CD4-positive, alpha-beta T cell (primary cell): ENCODE measurements at regions of chr4 and their contacts with region 1.

Region 1: DNA sequence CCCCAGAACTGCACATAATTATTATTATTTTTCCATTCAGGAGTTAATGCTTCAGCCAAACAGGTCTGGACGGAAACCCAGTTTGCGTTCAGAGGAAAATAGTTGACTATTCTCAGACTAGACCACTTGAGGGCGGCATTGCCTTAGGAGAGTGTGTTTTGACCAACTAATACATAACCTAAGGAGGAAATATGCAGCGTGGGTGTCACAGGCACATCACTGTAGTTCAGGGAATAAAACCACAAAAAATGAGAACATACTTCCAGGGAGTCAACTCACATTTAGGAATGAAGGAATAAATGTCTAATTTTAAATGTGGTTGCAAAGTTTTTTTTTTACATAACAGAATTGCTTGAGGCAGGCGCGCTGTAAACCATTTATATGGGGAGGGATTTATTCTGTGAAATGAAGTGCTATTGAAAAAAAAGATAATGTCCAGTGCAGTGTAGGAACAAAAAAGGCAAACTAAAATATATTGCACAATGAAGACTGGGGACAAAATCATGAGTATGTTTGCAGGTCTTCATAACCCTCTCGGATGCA is 93.3 kb downstream of the SYNPO2 start:
- DNase-seq: peak; percentile 8 to 71 (median 34)
- ATAC-seq: peak; percentile 76
- H3K4me3 ChIP-seq: no peak overlapping the region
- H3K4me3 Mint-ChIP-seq: no peak overlapping the region
- H3K27ac ChIP-seq: no peak overlapping the region
- H3K27ac Mint-ChIP-seq: no peak overlapping the region
- H3K4me1 ChIP-seq: no peaks in the 10 kb centered on the region
- H3K4me1 Mint-ChIP-seq: no peaks in the 10 kb centered on the region
- H3K27me3 ChIP-seq: no peaks in the 10 kb centered on the region
- H3K27me3 Mint-ChIP-seq: no peaks in the 10 kb centered on the region
- CTCF ChIP-seq: peak; percentile 69

Region 2: DNA sequence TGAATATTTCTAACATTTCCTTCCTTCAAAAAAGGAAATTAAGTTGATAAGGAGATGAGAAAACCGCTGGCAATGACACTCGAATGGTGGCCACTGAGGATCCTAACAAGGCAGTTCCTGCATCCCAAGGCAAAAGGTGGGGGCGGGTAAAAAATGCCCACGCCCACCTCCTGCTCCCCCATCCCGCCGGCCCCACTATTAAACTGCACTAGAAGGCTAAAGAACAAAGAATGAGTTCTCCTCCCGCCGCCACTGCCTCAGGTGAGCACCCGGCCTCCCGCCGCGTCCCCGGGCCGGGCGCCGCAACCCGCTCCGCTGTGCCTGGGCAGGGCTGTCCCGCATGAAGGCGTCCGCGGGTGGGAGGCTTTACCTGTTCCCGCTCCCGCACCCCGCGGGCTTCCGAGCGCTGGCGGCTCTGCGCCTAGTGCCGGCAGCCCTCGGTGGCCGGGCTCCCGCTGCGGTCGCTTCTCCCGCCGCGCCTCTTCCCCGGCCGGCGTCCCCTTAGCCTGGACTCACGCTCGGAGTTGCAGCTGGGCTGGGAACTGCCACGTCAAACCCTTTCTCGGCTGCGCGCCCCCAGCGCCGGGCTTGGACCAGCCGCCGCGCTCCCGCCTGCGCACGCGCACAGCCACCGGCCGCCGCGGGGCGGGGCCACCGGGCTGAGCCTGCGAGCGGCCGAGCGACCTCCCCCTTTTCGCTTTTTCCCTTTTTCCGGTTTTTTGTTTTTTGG is 146.2 kb before region 1 on chr4 and contains the start of gene SEC24D:
- CTCF ChIA-PET with region 1: no interaction called
- POLR2A ChIA-PET with region 1: no interaction called
- intact Hi-C with region 1: no loop called
- DNase-seq: peak; percentile 61 to 92 (median 76)
- ATAC-seq: peak; percentile 80
- H3K4me3 ChIP-seq: peak within 1 kb of the TSS; percentile 92
- H3K4me3 Mint-ChIP-seq: peak within 1 kb of the TSS; percentile 100
- H3K27ac ChIP-seq: peak within 1 kb of the TSS; percentile 72 to 91
- H3K27ac Mint-ChIP-seq: peak within 1 kb of the TSS; percentile 88
- H3K4me1 ChIP-seq: peaks cover 18% of the 10 kb centered on the region
- H3K4me1 Mint-ChIP-seq: peaks cover 24% of the 10 kb centered on the region
- H3K27me3 ChIP-seq: no peaks in the 10 kb centered on the region
- H3K27me3 Mint-ChIP-seq: no peaks in the 10 kb centered on the region
- CTCF ChIP-seq: no peak
- total RNA-seq, gene SEC24D: 13.9 to 14.8 TPM

Region 3: GRCh38 chr4:119016636-119017035 is 34.7 kb after region 1 on chr4:
- CTCF ChIA-PET with region 1: no interaction called
- POLR2A ChIA-PET with region 1: no interaction called
- intact Hi-C with region 1: no loop called
- DNase-seq: no peak
- ATAC-seq: no peak
- H3K4me3 ChIP-seq: no peak overlapping the region
- H3K4me3 Mint-ChIP-seq: no peak overlapping the region
- H3K27ac ChIP-seq: no peak overlapping the region
- H3K27ac Mint-ChIP-seq: no peak overlapping the region
- H3K4me1 ChIP-seq: no peaks in the 10 kb centered on the region
- H3K4me1 Mint-ChIP-seq: no peaks in the 10 kb centered on the region
- H3K27me3 ChIP-seq: peaks cover 0 to 10% of the 10 kb centered on the region in 2 experiments
- H3K27me3 Mint-ChIP-seq: peaks cover 40% of the 10 kb centered on the region
- CTCF ChIP-seq: no peak

Region 4: DNA sequence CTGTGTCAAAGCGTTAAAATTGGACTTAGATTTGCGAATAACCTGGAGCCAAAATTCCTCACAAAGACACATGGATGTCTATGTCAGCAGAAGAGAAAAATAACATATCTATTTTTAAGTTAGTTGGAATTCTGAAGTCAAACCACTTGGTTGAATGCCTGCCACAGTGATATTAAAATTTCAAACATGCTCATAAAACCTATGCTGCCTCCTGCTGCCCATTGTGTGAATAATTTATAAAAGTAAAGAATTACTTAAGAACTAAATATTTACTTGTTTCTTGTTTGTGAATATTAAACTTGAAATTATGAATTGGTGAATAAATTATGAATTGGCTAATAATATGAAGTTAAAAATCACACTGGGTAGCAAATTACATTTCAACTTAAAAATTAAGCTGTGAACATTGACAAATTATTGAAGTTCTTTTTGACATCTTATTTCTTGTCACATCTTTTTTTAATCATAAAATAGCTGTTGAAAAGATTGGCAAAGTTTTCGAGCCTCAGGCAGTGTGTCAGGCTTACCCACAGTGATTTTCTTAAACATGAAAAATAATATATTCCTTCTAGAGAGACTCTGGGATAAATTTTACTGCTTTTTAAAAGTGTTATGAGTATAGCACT is 304.6 kb after region 1 on chr4:
- CTCF ChIA-PET with region 1: no interaction called
- POLR2A ChIA-PET with region 1: no interaction called
- intact Hi-C with region 1: loop called in 1 of 2 experiments (anchors 5 kb)
- DNase-seq: peak in 10 of 14 experiments; percentile 3 to 74 (median 17)
- ATAC-seq: peak; percentile 55
- H3K4me3 ChIP-seq: no peak overlapping the region
- H3K4me3 Mint-ChIP-seq: no peak overlapping the region
- H3K27ac ChIP-seq: no peak overlapping the region
- H3K27ac Mint-ChIP-seq: no peak overlapping the region
- H3K4me1 ChIP-seq: no peaks in the 10 kb centered on the region
- H3K4me1 Mint-ChIP-seq: peaks cover 30% of the 10 kb centered on the region
- H3K27me3 ChIP-seq: no peaks in the 10 kb centered on the region
- H3K27me3 Mint-ChIP-seq: no peaks in the 10 kb centered on the region
- CTCF ChIP-seq: peak; percentile 76

Region 5: DNA sequence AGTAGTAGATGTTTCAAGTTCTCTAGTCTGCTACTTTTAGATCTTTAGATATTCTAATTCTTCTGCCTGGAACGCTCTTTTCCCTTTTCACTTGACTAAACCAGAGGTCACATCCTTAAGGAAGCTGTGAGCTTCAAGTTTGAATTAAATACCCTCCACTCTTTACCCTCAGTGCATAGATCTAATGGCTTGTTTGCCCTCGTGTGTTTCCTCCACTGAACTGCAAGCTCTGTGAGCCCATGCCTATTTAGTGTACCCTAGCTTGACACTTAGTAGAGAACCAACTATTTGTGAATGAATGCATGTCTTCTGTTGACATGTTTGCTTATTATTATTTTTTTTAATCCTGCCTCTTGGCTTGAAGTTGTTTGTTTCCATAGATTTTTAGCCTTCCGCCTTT is 508.4 kb after region 1 on chr4:
- CTCF ChIA-PET with region 1: no interaction called
- POLR2A ChIA-PET with region 1: no interaction called
- intact Hi-C with region 1: loop called in 1 of 2 experiments (anchors 10 kb)
- DNase-seq: peak in 1 of 14 experiments; percentile 7
- ATAC-seq: no peak
- H3K4me3 ChIP-seq: no peak overlapping the region
- H3K4me3 Mint-ChIP-seq: no peak overlapping the region
- H3K27ac ChIP-seq: no peak overlapping the region
- H3K27ac Mint-ChIP-seq: no peak overlapping the region
- H3K4me1 ChIP-seq: no peaks in the 10 kb centered on the region
- H3K4me1 Mint-ChIP-seq: no peaks in the 10 kb centered on the region
- H3K27me3 ChIP-seq: no peaks in the 10 kb centered on the region
- H3K27me3 Mint-ChIP-seq: no peaks in the 10 kb centered on the region
- CTCF ChIP-seq: no peak

Region 6: GRCh38 chr4:119628308-119629141 is 646.6 kb after region 1 on chr4 and contains the start of gene PDE5A:
- CTCF ChIA-PET with region 1: no interaction called
- POLR2A ChIA-PET with region 1: no interaction called
- intact Hi-C with region 1: loop called in 1 of 2 experiments (anchors 5 kb)
- DNase-seq: peak; percentile 54 to 87 (median 71)
- ATAC-seq: peak; percentile 83
- H3K4me3 ChIP-seq: peak within 1 kb of the TSS; percentile 64
- H3K4me3 Mint-ChIP-seq: peak within 1 kb of the TSS; percentile 94
- H3K27ac ChIP-seq: peak within 1 kb of the TSS in 1 of 2 donors; percentile 41
- H3K27ac Mint-ChIP-seq: peak within 1 kb of the TSS; percentile 75
- H3K4me1 ChIP-seq: peaks cover 23% of the 10 kb centered on the region
- H3K4me1 Mint-ChIP-seq: peaks cover 28% of the 10 kb centered on the region
- H3K27me3 ChIP-seq: peaks cover 5 to 6% of the 10 kb centered on the region in 2 experiments
- H3K27me3 Mint-ChIP-seq: peaks cover 32% of the 10 kb centered on the region
- CTCF ChIP-seq: peak; percentile 74
- total RNA-seq, gene PDE5A: 0.11 to 0.56 TPM

Region 7: DNA sequence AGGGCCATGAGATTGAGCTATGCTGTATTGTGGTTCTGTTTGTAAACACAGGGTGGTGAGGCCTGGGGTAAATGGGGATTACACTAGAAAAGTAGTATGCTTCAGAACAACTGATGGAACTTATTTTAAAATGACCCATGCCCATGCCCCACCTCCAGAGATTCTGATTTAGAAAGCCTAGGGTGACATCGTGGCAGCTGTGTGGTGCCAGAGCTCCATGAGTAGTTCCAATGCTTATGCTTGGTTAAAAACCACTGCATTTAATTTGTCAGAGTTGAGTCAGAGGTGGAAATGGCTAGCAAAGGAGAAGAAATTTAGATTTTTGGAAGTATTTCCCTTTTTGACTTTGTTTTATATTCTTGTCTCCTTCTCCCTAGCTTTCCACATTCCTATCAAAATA is 710.1 kb after region 1 on chr4:
- CTCF ChIA-PET with region 1: no interaction called
- POLR2A ChIA-PET with region 1: no interaction called
- intact Hi-C with region 1: no loop called
- DNase-seq: no peak
- ATAC-seq: no peak
- H3K4me3 ChIP-seq: no peak overlapping the region
- H3K4me3 Mint-ChIP-seq: no peak overlapping the region
- H3K27ac ChIP-seq: no peak overlapping the region
- H3K27ac Mint-ChIP-seq: no peak overlapping the region
- H3K4me1 ChIP-seq: no peaks in the 10 kb centered on the region
- H3K4me1 Mint-ChIP-seq: no peaks in the 10 kb centered on the region
- H3K27me3 ChIP-seq: no peaks in the 10 kb centered on the region
- H3K27me3 Mint-ChIP-seq: peaks cover 45% of the 10 kb centered on the region
- CTCF ChIP-seq: no peak

Region 8: GRCh38 chr4:120049732-120050494 is 1068.0 kb after region 1 on chr4:
- CTCF ChIA-PET with region 1: no interaction called
- POLR2A ChIA-PET with region 1: no interaction called
- intact Hi-C with region 1: loop called in 1 of 2 experiments (anchors 2 kb)
- DNase-seq: peak; percentile 36 to 84 (median 60)
- ATAC-seq: peak; percentile 97
- H3K4me3 ChIP-seq: no peak overlapping the region
- H3K4me3 Mint-ChIP-seq: no peak overlapping the region
- H3K27ac ChIP-seq: no peak overlapping the region
- H3K27ac Mint-ChIP-seq: no peak overlapping the region
- H3K4me1 ChIP-seq: peaks cover 4% of the 10 kb centered on the region
- H3K4me1 Mint-ChIP-seq: peaks cover 4% of the 10 kb centered on the region
- H3K27me3 ChIP-seq: no peaks in the 10 kb centered on the region
- H3K27me3 Mint-ChIP-seq: no peaks in the 10 kb centered on the region
- CTCF ChIP-seq: peak; percentile 89